CD8-positive, alpha-beta T cell (primary cell): ENCODE measurements at regions of chr11 and their contacts with region 1.

Region 1: DNA sequence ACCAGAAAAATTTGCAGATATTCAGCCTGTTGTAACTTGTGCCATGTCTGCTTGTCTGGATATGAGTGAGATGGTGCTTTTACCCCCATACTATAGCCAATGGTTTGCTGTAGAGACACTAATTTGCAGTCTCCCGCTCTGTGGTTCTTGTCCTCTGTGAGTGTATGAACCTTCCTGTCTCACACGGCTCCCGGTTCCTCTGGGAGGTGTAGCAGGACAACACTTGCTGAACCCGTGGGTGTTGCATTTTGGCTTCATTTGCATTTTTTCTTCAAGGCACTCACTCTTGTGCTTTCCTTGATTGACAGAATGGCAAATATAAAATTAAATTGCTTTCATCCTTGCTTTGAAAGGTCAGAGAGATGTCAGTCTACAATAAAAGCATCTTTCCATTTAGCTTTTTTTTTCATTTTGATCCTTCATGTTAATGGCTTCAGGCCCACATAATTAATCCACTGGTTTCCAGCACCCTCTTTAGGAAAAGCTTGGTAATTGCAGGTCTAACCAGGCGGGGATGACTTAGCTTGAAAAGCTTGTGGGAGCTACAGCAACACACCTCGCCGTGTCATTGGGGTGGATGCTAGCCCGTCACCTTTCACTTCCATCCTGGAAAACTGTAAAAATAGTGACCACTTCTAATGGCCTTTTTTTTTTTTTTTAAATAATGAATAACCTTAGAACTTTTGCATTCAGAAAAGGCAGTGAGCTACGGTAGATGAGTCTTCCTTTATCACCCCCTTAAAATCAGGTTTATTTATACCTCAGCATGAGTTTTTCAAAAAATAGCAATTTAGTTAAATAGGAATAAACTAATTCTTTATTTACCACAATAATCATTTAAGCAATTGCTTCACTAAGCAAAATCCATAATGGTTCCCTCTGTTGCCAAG is 27.4 kb upstream of the ST14 start:
- DNase-seq: peak in 8 of 9 experiments; percentile 33 to 76 (median 54)
- ATAC-seq: peak; percentile 92
- H3K4me3 ChIP-seq: no peak overlapping the region
- H3K4me3 Mint-ChIP-seq: no peak overlapping the region
- H3K27ac ChIP-seq: no peak overlapping the region
- H3K27ac Mint-ChIP-seq: no peak overlapping the region
- H3K4me1 ChIP-seq: no peaks in the 10 kb centered on the region
- H3K4me1 Mint-ChIP-seq: no peaks in the 10 kb centered on the region
- H3K27me3 ChIP-seq: no peaks in the 10 kb centered on the region
- H3K27me3 Mint-ChIP-seq: no peaks in the 10 kb centered on the region
- CTCF ChIP-seq: peak; percentile 90

Region 2: GRCh38 chr11:129364143-129364654 is 768.0 kb before region 1 on chr11:
- CTCF ChIA-PET with region 1: no interaction called
- POLR2A ChIA-PET with region 1: no interaction called
- intact Hi-C with region 1: loop called in 1 of 2 experiments (anchors 2 kb)
- DNase-seq: peak; percentile 35 to 85 (median 69)
- ATAC-seq: peak; percentile 87
- H3K4me3 ChIP-seq: no peak overlapping the region
- H3K4me3 Mint-ChIP-seq: no peak overlapping the region
- H3K27ac ChIP-seq: no peak overlapping the region
- H3K27ac Mint-ChIP-seq: no peak overlapping the region
- H3K4me1 ChIP-seq: no peaks in the 10 kb centered on the region
- H3K4me1 Mint-ChIP-seq: no peaks in the 10 kb centered on the region
- H3K27me3 ChIP-seq: peaks cover 0 to 7% of the 10 kb centered on the region in 2 experiments
- H3K27me3 Mint-ChIP-seq: peaks cover 34% of the 10 kb centered on the region
- CTCF ChIP-seq: peak; percentile 84

Region 3: DNA sequence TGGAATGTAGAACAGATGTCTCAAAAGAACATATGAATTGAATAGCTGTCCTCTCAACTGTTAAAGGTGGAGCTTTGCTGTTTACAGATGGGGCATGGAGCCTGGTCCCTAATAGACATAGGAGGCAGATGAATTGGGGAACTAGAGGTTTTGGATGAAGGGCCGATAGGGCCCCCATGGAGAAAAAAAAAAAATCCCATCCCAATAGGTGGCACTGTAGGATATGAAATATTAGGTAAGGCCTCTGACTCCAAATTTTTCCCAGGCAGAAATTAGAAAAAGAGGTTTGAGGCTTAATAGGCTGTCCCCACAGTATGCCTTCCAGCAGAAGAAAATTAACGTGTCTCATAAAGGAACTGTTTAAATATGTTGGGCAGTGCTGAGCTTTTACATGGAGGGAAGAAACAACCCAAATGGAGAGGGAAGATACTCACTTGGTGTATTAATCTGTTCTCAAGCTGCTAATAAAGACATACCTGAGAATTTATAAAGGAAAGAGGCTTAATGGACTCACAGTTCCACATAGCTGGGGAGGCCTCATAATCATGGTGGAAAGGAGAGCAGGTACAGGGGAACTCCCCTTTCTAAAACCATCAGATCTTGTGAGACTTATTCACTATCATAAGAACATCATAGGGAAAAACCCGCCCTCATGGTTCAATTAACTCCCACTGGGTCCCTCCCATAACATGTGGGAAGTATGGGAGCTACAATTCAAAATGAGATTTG is 346.7 kb before region 1 on chr11:
- CTCF ChIA-PET with region 1: interaction called, 27 read pairs
- POLR2A ChIA-PET with region 1: no interaction called
- intact Hi-C with region 1: loop called (anchors 1 kb)
- DNase-seq: peak in 2 of 9 experiments; percentile 6 to 15
- ATAC-seq: no peak
- H3K4me3 ChIP-seq: no peak overlapping the region
- H3K4me3 Mint-ChIP-seq: no peak overlapping the region
- H3K27ac ChIP-seq: no peak overlapping the region
- H3K27ac Mint-ChIP-seq: no peak overlapping the region
- H3K4me1 ChIP-seq: no peaks in the 10 kb centered on the region
- H3K4me1 Mint-ChIP-seq: peaks cover 6% of the 10 kb centered on the region
- H3K27me3 ChIP-seq: no peaks in the 10 kb centered on the region
- H3K27me3 Mint-ChIP-seq: no peaks in the 10 kb centered on the region
- CTCF ChIP-seq: peak; percentile 29

Region 4: DNA sequence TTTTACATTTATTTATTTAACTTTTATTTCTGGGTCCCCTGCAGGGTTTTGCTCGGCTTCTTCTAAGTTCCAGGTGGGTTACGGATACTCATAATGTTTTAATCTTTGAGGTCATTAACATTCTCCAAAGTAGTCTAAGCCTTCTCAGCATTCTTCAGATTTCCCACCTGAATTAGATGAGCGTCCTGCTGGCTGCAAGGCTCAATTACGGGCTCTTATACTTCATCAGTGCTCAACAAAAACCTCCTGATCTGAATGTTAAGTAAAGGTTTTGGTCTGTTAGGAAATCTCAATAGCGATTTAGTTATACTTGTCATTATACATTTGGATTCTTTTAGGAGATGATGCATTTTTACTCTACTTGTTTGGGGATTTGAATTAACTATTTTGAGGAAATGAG is 209.5 kb before region 1 on chr11:
- CTCF ChIA-PET with region 1: interaction called, 125 read pairs
- POLR2A ChIA-PET with region 1: interaction called, 3 read pairs
- intact Hi-C with region 1: loop called (anchors 1 kb)
- DNase-seq: no peak
- ATAC-seq: no peak
- H3K4me3 ChIP-seq: no peak overlapping the region
- H3K4me3 Mint-ChIP-seq: no peak overlapping the region
- H3K27ac ChIP-seq: no peak overlapping the region
- H3K27ac Mint-ChIP-seq: no peak overlapping the region
- H3K4me1 ChIP-seq: peaks cover 5% of the 10 kb centered on the region
- H3K4me1 Mint-ChIP-seq: peaks cover 6% of the 10 kb centered on the region
- H3K27me3 ChIP-seq: peaks cover 0 to 3% of the 10 kb centered on the region in 2 experiments
- H3K27me3 Mint-ChIP-seq: no peaks in the 10 kb centered on the region
- CTCF ChIP-seq: no peak

Region 5: GRCh38 chr11:129992161-129992944 is 139.9 kb before region 1 on chr11:
- CTCF ChIA-PET with region 1: interaction called, 52 read pairs
- POLR2A ChIA-PET with region 1: interaction called, 3 read pairs
- intact Hi-C with region 1: loop called (anchors 1 kb)
- DNase-seq: peak in 6 of 9 experiments; percentile 20 to 63 (median 48)
- ATAC-seq: peak; percentile 91
- H3K4me3 ChIP-seq: no peak overlapping the region
- H3K4me3 Mint-ChIP-seq: no peak overlapping the region
- H3K27ac ChIP-seq: no peak overlapping the region
- H3K27ac Mint-ChIP-seq: peak overlapping the region; percentile 46
- H3K4me1 ChIP-seq: no peaks in the 10 kb centered on the region
- H3K4me1 Mint-ChIP-seq: peaks cover 10% of the 10 kb centered on the region
- H3K27me3 ChIP-seq: no peaks in the 10 kb centered on the region
- H3K27me3 Mint-ChIP-seq: no peaks in the 10 kb centered on the region
- CTCF ChIP-seq: peak; percentile 42

Region 6: GRCh38 chr11:130069684-130070108 is 62.5 kb before region 1 on chr11 and contains the start of gene APLP2:
- CTCF ChIA-PET with region 1: interaction called, 4 read pairs
- POLR2A ChIA-PET with region 1: no interaction called
- intact Hi-C with region 1: loop called (anchors 2 to 5 kb)
- DNase-seq: peak; percentile 94 to 99 (median 97)
- ATAC-seq: peak; percentile 93
- H3K4me3 ChIP-seq: peak within 1 kb of the TSS; percentile 77 to 88
- H3K4me3 Mint-ChIP-seq: peak within 1 kb of the TSS; percentile 97
- H3K27ac ChIP-seq: peak within 1 kb of the TSS; percentile 74 to 80
- H3K27ac Mint-ChIP-seq: peak within 1 kb of the TSS; percentile 95
- H3K4me1 ChIP-seq: peaks cover 17% of the 10 kb centered on the region
- H3K4me1 Mint-ChIP-seq: peaks cover 18% of the 10 kb centered on the region
- H3K27me3 ChIP-seq: no peaks in the 10 kb centered on the region
- H3K27me3 Mint-ChIP-seq: peaks cover 4% of the 10 kb centered on the region
- CTCF ChIP-seq: no peak
- total RNA-seq, gene APLP2: 23.2 to 24.7 TPM

Region 7: DNA sequence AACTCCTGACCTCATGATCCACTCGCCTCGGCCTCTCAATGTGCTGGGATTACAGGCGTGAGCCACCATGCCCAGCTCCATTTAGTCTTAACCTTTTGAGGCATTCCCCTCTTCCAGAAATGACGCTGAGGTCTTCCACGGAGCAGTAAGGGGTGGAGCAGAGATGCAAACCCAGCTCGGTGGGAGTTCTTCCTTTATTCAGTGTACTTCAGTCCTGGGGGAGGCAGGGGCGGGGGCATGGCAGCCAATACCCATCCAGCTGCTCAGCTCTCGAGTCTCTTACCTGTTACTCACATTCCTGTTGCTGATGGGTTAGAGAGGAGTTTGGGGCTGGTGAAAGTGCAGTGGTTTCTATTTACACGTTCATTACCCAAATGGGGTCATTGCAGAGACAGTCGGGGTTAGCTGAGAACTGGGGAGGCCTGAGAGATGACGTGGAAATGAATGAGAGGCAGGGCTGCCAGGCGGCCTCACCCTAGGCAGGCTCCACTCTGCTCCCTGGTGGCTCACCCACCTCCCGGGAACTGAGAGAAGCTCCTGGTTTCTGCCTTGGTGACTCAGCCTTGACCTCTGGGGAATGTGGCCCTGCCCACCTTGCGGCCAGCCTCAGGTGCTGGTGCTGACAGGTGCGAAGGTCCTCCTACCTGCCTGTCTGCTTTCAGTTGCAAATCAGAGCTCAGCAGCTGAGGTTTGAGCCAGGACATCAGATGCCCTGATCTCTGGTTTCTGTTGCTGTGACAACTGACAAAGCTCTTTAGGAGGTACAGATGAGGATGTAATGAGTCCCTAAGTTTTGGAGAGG is 14.0 kb after region 1 on chr11:
- CTCF ChIA-PET with region 1: interaction called, 37 read pairs
- POLR2A ChIA-PET with region 1: no interaction called
- intact Hi-C with region 1: no loop called
- DNase-seq: peak in 1 of 9 experiments; percentile 20
- ATAC-seq: peak; percentile 40
- H3K4me3 ChIP-seq: no peak overlapping the region
- H3K4me3 Mint-ChIP-seq: no peak overlapping the region
- H3K27ac ChIP-seq: peak overlapping the region in 1 of 2 experiments; percentile 19
- H3K27ac Mint-ChIP-seq: peak overlapping the region; percentile 49
- H3K4me1 ChIP-seq: peaks cover 13% of the 10 kb centered on the region
- H3K4me1 Mint-ChIP-seq: peaks cover 14% of the 10 kb centered on the region
- H3K27me3 ChIP-seq: no peaks in the 10 kb centered on the region
- H3K27me3 Mint-ChIP-seq: no peaks in the 10 kb centered on the region
- CTCF ChIP-seq: no peak